ENCODE measurements at regions of chr16 and their contacts with region 1.

Region 1: GRCh38 chr16:1677802-1678496 is at the start of gene JPT2:
- DNase-seq: peak; percentile 98
- H3K4me3 Mint-ChIP-seq: peak within 1 kb of the TSS; percentile 95
- H3K27ac Mint-ChIP-seq: peak within 1 kb of the TSS; percentile 79
- H3K4me1 Mint-ChIP-seq: peaks cover 35% of the 10 kb centered on the region
- H3K27me3 Mint-ChIP-seq: no peaks in the 10 kb centered on the region
- total RNA-seq, gene JPT2: 54.0 to 69.4 TPM

Region 2: DNA sequence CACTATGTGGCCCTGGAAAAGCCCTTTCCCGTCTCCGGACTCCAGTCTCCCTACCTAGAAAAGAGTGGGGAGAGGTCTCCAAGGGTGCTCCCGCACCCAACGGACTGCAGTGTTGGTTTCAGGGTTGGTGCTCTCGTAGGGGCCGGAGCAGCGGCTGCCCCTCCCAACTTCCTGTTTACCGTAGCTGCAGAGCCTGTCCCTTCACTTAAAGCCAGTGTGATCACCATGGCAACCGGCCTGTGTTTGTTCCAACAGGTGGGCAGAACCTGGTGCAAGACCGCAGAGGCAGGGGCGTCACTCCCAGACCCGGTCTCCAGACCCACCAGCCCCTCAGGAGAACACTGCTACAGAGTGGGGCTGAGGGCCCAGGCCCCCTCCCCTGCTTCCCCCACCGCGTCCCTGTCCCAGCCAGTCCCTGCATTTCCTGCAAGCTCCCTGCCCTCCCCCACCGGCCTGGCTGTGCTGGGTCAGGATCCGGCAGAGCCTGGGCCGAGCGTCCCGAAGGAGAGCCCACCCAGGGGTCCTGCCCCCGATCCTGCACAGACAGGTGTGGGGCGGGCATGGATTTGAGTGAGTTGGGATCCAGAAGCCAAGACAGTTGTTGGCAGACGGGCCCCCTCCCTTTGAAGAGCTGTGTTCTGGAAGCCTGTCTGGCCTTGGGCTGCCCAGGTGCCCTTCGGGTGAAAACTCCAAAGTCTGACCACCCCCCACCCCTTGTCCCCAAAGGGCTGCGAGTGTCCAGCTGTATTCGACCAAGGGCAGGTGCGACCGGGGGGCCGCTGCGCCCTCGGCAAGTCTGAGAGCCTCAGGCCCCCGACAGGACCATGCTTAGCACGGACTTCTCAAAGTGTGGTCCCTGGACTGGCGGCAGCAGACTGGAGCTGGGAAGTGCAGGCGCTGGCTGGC is 346.0 kb before region 1 on chr16:
- CTCF ChIA-PET with region 1: no interaction called
- intact Hi-C with region 1: loop called (anchors 10 kb)
- DNase-seq: peak; percentile 27
- H3K4me3 Mint-ChIP-seq: no peak overlapping the region
- H3K27ac Mint-ChIP-seq: no peak overlapping the region
- H3K4me1 Mint-ChIP-seq: peaks cover 13% of the 10 kb centered on the region
- H3K27me3 Mint-ChIP-seq: peaks cover 24% of the 10 kb centered on the region

Region 3: DNA sequence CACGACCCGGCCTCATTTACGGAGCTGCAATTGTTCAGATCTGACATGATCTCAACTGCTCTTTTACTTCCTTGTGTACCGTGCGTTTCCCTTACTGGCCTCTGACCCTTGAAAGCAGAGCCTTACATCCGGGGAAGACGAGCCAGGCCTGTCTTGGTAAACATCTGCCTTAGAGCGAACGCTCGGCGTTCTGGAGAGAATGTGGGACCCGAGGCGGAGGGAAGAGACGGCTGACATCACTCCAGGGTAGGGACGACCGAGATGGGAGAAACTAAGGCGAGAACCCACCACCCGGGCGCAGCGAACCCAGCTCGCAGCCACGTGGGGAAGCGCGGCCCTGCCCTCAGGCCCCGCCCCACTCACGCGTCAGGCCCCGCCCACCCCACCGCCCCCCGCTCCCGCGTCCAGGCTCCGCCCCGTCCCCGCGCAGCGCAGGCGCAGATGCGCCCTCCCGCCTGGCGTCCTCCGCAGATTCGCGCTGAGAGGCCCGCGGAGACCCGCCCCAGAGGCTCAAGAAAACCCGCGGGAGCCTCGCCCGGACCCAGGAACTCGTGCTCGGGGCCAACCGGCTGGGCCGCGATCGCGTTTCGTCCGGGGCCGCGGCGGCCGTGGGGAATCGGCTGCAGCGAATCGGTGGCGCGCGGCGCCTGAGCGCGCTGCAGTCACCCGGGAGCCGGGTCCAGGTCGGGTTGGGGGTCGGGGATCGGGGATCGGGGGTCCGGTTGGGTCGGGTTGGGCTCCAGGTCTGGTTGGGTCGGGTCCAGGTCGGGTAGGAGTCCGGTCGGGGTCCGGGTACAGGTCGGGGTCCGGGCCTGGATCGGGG is 184.8 kb before region 1 on chr16 and contains the start of gene TELO2:
- CTCF ChIA-PET with region 1: no interaction called
- intact Hi-C with region 1: loop called (anchors 1 kb)
- DNase-seq: peak; percentile 85
- H3K4me3 Mint-ChIP-seq: peak within 1 kb of the TSS; percentile 90
- H3K27ac Mint-ChIP-seq: peak within 1 kb of the TSS; percentile 94
- H3K4me1 Mint-ChIP-seq: peaks cover 16% of the 10 kb centered on the region
- H3K27me3 Mint-ChIP-seq: no peaks in the 10 kb centered on the region
- total RNA-seq, gene TELO2: 68.1 to 76.1 TPM

Region 4: GRCh38 chr16:1509307-1510221 is 168.4 kb before region 1 on chr16:
- CTCF ChIA-PET with region 1: no interaction called
- intact Hi-C with region 1: no loop called
- DNase-seq: no peak
- H3K4me3 Mint-ChIP-seq: no peak overlapping the region
- H3K27ac Mint-ChIP-seq: no peak overlapping the region
- H3K4me1 Mint-ChIP-seq: no peaks in the 10 kb centered on the region
- H3K27me3 Mint-ChIP-seq: no peaks in the 10 kb centered on the region

Region 5: DNA sequence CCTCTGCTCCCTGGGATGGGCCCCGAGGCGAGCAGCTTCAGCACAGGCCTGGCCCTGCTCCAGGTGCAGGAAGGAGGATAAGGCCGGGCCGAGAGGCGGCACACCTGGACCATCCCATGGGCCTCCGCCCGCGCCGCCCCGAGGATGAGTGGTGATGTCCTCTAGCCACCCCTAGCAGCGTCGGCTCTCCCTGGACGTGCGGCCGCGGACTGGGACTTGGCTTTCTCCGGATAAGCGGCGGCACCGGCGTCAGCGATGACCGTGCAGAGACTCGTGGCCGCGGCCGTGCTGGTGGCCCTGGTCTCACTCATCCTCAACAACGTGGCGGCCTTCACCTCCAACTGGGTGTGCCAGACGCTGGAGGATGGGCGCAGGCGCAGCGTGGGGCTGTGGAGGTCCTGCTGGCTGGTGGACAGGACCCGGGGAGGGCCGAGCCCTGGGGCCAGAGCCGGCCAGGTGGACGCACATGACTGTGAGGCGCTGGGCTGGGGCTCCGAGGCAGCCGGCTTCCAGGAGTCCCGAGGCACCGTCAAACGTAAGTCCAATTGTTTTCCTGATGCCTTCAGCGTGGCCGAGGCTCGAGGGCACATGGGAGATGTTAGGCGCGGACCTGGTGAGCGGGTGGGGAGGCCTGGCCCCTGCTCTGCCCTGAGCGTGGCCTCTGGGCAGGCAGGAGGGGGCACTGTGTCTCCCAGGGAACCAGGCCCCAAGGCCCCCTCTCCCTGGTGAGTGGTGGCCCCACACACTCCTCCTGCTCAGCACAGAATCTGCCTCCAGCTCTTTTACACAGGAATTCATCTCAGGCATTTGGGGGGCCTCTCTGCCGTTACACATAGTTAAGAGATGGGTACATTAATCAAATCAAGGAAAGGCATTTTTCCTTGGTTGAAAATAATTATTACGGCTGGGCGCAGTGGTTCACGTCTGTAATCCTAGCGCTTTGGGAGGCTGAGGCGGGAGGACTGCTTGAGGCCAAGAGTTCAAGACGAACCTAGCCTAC is 143.6 kb before region 1 on chr16:
- CTCF ChIA-PET with region 1: interaction called, 3 read pairs
- intact Hi-C with region 1: loop called (anchors 2 kb)
- DNase-seq: peak; percentile 48
- H3K4me3 Mint-ChIP-seq: peak overlapping the region; percentile 97
- H3K27ac Mint-ChIP-seq: peak overlapping the region; percentile 95
- H3K4me1 Mint-ChIP-seq: peaks cover 49% of the 10 kb centered on the region
- H3K27me3 Mint-ChIP-seq: no peaks in the 10 kb centered on the region

Region 6: DNA sequence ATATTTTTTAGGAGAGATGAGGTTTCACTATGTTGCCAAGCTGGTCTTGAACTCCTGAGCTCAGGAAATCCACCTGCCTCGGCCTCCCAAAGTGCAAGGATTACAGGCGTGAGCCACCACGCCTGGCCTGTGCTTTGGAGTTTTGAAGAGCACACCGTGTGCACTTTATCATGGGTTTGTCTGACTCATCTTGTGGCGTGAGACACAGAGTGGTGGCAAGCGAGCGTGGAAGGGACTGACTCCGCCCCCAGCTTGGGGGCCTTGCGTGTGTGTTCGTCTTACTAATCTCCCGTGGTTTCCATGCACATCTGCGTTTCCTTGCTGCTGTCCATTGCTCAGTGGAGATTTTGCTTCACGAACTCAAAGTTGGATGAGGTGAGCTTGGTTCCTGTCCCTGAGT is 42.9 kb before region 1 on chr16:
- CTCF ChIA-PET with region 1: no interaction called
- intact Hi-C with region 1: no loop called
- DNase-seq: no peak
- H3K4me3 Mint-ChIP-seq: no peak overlapping the region
- H3K27ac Mint-ChIP-seq: no peak overlapping the region
- H3K4me1 Mint-ChIP-seq: no peaks in the 10 kb centered on the region
- H3K27me3 Mint-ChIP-seq: no peaks in the 10 kb centered on the region

Region 7: DNA sequence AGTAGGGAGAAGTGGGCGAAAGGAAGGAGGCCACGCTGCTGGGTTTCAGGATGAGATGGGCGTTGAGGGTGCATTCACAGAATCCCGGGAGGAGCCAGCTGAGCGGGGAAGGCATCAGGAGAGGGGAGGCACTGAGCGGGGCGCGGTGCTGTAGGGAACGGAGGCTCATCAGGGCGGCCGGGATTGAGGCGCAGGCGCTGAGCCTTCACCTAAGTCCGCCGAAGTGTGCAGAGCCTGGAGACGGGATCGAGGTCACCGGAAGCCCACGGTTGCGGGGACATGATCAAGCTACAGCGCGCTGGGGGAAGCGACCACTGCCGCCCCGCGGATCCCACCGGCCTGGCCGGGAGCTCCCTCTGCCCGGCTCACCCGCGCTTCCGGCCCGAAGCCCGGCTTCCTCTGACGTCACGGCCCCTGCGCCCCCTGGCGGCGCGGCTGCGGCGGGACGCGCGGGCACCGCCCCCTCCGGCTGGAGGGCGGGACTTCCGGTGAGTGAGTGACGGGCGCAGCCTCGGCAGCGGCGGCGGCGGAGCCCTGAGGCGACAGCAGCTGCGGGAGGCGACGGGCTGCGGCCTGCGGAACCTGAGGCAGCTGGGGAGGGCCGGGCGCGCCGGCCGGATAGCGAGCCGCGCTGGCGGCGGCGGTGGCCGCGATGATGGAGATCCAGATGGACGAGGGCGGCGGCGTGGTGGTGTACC is 27.9 kb after region 1 on chr16 and contains the start of gene MAPK8IP3:
- CTCF ChIA-PET with region 1: interaction called, 8 read pairs
- intact Hi-C with region 1: loop called (anchors 1 kb)
- DNase-seq: peak; percentile 91
- H3K4me3 Mint-ChIP-seq: peak within 1 kb of the TSS; percentile 98
- H3K27ac Mint-ChIP-seq: peak within 1 kb of the TSS; percentile 92
- H3K4me1 Mint-ChIP-seq: peaks cover 32% of the 10 kb centered on the region
- H3K27me3 Mint-ChIP-seq: no peaks in the 10 kb centered on the region
- total RNA-seq, gene MAPK8IP3: 46.5 to 50.7 TPM

Region 8: DNA sequence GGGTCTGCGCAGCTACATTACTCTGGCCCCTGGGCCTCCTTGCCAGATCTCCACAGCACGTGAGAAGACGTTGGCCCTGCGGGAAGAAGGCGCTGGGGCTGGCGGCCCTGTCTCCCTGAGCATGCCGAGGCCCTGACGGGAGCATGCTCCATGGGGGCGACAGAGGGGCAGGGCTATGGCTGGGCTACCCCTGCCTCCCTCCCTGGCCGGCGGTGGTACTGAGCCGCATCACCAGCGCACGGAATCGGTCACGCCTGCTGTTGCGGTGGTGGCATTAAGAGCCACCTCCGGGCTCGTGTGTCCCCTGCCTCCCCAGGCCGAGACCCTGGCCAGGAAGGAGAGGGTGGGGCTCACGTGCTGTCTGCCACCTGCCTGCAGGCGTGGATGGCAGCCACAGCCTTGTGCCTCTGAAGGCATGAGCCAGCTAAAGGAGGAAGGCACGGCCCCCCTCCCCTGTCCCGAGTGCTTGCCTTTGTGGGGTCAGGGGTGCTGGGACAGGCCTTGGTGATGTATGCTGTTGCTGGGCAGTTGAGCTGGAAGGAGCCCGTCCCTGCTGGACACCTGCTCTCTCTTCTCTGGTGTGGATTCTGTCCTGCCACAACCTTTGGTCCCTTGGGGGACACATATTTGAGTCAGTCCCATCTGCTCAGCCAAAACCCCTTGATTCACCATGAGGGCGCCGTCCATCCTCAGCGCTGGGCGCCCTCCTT is 56.3 kb after region 1 on chr16:
- CTCF ChIA-PET with region 1: no interaction called
- intact Hi-C with region 1: no loop called
- DNase-seq: no peak
- H3K4me3 Mint-ChIP-seq: no peak overlapping the region
- H3K27ac Mint-ChIP-seq: no peak overlapping the region
- H3K4me1 Mint-ChIP-seq: no peaks in the 10 kb centered on the region
- H3K27me3 Mint-ChIP-seq: no peaks in the 10 kb centered on the region

Region 9: DNA sequence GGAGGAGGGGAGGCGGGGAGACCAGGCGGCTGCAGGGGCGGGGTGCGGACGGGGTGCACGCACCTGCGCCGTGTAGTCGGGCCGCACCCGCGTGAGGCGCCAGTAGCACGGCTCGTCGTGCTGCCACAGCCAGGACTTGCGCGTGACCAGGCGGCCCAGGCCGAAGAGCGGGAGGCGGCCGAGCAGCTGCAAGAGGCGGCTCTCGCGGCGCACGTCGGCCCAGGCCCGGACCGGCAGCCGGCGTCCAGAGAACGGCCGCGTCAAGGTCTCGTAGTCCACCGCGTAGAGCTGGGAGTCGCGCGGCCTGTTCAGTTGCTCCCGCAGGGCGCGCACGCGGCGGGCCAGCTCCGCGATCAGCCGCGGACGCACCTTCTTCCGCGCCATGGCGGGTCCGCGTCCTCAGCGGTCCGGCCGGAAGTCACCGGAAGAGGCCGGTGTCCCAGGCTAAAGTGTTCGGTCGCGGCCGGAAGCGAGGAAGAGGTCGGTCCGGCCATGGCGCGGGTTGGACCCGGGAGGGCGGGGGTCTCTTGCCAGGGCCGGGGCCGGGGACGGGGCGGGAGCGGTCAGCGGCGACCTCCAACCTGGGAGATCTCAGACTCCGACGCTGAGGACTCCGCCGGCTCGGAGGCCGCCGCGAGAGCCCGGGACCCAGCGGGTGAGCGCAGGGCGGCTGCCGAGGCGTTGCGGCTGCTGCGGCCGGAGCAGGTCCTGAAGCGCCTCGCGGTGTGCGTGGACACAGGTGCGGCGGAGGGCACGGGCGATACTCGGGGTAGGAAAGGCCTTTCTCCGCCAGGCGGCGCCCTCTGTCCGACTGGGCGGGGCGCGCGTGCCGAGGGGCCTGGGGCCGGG is 95.0 kb after region 1 on chr16 and contains the starts of genes EME2 and MRPS34:
- CTCF ChIA-PET with region 1: no interaction called
- intact Hi-C with region 1: loop called (anchors 1 kb)
- DNase-seq: peak; percentile 85
- H3K4me3 Mint-ChIP-seq: peak within 1 kb of the TSS; percentile 93
- H3K27ac Mint-ChIP-seq: peak within 1 kb of the TSS; percentile 93
- H3K4me1 Mint-ChIP-seq: peaks cover 7% of the 10 kb centered on the region
- H3K27me3 Mint-ChIP-seq: no peaks in the 10 kb centered on the region
- total RNA-seq, gene EME2: 7.7 to 7.8 TPM
- total RNA-seq, gene MRPS34: 122 to 138 TPM

Region 10: GRCh38 chr16:1826691-1827575 is 149.0 kb after region 1 on chr16 and contains the starts of genes FAHD1 and HAGH:
- CTCF ChIA-PET with region 1: no interaction called
- intact Hi-C with region 1: loop called (anchors 1 kb)
- DNase-seq: peak; percentile 92
- H3K4me3 Mint-ChIP-seq: peak within 1 kb of the TSS; percentile 91
- H3K27ac Mint-ChIP-seq: peak within 1 kb of the TSS; percentile 78
- H3K4me1 Mint-ChIP-seq: peaks cover 50% of the 10 kb centered on the region
- H3K27me3 Mint-ChIP-seq: no peaks in the 10 kb centered on the region
- total RNA-seq, gene FAHD1: 6.0 to 7.3 TPM
- total RNA-seq, gene HAGH: 29.9 to 30.1 TPM

Measured in activated naive CD4-positive, alpha-beta T cell treated with anti-CD3 and anti-CD28 coated beads for 36 hours (primary cell).